ENCODE measurements at regions of chr15 and their contacts with region 1.

Region 1: DNA sequence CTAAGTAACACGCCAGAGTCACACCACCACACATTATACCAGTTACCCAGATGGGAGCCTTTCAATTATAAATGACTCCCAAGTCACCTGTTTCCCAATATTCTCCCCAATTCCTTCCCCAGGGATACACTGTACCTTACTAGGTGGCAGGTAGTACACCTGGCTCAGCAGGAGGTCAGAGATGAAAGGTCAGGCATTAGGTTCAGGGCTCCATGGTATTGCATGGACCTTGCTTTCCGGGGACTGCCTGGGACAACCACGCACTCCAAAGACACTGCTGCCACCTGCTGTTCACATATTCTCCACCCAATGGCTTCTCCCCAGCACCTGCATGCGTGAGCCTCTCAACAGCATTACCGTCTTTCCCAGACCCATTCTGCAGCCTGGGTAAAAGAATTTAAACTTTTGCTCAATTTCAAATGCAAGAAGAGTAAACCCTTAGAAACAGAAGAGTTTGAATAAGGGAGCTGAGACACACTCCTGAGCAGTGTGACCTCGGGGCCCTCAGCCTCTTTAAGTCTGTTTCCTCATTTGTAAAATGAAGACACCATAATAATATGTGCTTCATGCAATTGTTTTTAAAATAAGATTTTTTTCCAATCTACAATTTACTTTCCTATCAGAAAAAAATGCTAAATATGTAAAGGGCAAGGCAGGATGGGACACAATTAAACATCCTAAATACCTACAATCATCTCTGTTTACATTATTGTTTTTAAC is 28.0 kb upstream of the LACTB start:
- DNase-seq: peak; percentile 80
- ATAC-seq: peak; percentile 93

Region 2: GRCh38 chr15:62469874-62470688 is 623.6 kb before region 1 on chr15:
- intact Hi-C with region 1: no loop called
- DNase-seq: peak; percentile 61
- ATAC-seq: peak; percentile 70

Region 3: DNA sequence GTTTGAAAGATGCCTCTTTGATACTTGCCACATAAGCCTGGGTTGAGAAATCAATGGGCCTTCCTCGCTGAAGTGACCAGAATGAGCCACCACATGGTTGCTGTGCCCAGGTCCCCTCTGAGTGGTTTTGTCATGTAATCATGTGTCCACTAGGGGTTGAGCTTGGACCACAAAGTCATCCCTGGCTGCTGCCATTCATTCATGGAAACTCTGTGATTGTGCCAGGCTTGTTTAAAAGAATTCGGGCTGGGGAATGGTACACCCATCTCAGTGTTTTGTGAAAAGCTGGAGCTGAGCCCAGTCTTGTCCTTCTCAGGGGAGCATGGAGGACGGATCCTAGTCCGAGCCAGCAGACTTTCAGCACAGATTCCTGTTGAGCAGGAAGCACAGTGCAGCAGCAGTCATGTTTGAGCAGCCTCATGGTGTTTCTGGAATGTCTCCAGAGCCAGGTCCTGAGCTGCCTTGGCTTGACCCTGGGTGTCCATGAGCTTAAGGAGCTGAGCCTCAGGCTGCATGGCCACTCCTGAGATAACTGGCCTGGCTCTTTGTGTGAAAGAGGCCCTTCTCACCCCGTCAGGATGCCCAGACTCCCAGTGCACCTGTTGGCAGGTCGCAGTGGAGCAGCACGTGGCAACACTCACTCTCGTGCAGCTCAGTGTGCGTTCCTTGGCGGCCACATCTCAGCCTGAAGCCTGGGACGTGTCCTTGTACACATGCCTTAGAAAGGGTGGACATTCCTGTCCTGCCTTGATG is 311.4 kb before region 1 on chr15:
- intact Hi-C with region 1: loop called (anchors 10 kb)
- DNase-seq: peak; percentile 75
- ATAC-seq: peak; percentile 90

Region 4: DNA sequence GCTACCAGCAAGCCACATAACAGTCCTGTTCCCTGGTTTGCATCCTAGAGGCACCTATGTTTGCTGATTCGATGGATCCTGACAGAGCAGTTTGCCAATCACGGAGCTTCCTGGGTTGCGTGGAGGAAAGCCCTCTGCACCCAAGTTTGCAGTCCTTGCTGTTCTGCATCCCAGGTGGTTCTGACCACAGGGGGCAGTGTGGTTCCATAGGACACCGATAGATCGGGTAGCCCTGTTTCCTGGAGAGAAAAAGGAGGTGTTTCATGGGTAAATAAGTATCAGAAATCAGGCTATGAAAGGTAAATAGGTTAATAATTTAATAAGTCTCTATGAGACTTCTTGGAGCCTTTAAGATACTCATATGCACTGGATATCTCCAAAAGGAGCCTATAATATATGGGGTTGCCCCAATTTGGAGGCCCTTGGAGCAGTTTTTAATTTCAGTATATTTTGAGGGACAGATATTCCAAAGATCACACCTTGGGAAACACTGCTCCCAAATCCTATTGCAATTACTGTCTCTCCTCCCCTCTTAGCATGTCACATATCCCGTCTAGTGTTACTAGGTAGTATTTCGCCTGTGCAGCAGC is 245.7 kb before region 1 on chr15:
- intact Hi-C with region 1: loop called (anchors 5 kb)
- DNase-seq: peak; percentile 85
- ATAC-seq: peak; percentile 77

Region 5: DNA sequence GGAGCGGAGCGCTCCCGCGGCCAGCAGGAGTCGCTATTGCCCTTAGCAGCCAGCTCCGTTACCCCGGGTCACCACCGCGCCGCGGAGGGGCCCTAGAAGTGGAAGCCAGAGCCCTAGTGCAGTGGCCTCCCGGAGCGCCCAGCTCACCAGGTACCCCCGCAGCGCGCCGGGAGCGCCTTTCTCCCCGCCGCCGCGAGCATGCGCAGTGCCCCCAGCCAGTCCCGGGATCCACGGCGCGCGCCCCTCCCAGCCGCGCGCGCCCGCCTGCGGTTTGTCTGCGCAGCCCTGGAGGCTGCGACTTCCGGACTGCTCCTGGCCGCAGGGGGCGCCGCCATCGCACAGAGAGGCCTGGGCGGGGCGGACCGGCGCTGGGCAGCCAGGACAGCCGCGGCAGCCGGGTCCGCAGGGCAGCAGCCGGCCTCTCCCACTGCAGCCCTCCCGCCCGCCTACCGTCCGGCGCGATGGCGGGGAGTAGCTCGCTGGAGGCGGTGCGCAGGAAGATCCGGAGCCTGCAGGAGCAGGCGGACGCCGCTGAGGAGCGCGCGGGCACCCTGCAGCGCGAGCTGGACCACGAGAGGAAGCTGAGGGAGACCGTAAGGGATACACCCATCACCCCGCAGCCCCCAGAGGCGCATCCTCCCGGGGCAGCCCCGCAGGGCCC is 45.4 kb before region 1 on chr15:
- intact Hi-C with region 1: loop called (anchors 5 kb)
- DNase-seq: peak; percentile 95
- ATAC-seq: peak; percentile 74

Region 6: DNA sequence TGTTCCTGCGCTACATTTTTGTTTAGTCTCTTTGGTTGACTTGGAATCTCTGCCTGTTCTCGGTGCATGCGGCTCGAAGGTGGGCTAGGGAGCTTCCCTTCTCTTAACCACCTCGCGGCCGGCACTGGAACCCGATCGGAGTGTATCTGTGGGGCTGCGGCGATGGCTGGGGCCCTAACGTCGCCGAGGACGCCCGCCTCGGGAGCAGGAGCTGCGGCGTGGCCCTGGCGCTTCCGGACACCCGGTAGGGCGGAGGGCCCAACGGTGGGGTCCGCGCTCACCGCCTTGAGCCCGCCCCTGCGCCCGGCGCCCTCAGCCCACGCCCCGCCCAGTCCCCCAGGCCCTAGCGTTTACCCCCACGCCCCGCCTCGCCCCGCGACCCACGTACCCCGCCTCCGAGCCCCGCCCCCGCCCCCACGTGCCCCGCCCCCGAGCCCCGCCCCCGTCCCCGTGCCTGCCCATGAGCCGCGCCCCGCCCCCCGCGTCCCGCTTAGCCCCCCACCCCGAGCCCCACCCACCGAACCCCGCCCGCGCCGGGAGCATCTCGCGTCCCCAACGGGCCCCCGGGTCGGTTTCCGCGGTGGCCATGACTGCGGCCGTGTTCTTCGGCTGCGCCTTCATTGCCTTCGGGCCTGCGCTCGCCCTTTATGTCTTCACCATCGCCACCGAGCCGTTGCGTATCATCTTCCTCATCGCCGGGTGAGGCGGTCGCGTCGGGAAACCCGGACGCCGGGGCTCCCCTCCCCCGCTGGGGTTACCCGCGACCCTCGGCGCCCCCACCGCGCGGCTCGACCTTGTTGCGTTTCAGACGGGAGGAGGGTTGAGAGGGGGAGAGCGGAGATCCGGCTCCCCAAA is 183.6 kb after region 1 on chr15 and contains the start of gene APH1B:
- intact Hi-C with region 1: no loop called
- DNase-seq: peak; percentile 93
- ATAC-seq: peak; percentile 97
- total RNA-seq, gene APH1B: 5.6 TPM

Region 7: GRCh38 chr15:63306492-63307073 is 212.9 kb after region 1 on chr15:
- intact Hi-C with region 1: no loop called
- DNase-seq: no peak
- ATAC-seq: no peak